Mucosa of descending colon (tissue), 3 donors: ENCODE measurements at regions of chr22 and their contacts with region 1.

Region 1: DNA sequence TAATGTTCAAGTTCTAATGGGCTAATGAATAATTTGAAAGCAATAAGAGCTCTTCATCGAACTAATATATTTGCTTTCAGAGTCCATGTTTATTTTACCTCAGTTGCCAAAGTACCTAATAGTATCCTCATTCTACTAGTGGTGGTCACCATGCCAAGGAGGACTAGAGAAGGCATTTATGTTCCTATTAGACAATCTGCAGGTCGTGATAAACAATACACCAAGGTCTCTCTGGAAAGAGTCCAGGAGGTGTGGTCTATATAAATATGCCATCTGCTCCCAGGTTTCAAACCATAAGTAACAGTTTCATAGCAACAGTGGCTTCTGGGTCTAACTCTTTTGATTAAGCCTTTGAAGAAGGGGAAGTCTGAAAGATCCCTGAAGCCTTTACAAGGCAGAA is 42.9 kb downstream of the ARFGAP3 start:
- DNase-seq: peak in 1 of 3 donors; percentile 27
- ATAC-seq: no peak
- H3K4me3 ChIP-seq: no peak overlapping the region
- H3K4me1 ChIP-seq: no peaks in the 10 kb centered on the region
- CTCF ChIP-seq: no peak

Region 2: DNA sequence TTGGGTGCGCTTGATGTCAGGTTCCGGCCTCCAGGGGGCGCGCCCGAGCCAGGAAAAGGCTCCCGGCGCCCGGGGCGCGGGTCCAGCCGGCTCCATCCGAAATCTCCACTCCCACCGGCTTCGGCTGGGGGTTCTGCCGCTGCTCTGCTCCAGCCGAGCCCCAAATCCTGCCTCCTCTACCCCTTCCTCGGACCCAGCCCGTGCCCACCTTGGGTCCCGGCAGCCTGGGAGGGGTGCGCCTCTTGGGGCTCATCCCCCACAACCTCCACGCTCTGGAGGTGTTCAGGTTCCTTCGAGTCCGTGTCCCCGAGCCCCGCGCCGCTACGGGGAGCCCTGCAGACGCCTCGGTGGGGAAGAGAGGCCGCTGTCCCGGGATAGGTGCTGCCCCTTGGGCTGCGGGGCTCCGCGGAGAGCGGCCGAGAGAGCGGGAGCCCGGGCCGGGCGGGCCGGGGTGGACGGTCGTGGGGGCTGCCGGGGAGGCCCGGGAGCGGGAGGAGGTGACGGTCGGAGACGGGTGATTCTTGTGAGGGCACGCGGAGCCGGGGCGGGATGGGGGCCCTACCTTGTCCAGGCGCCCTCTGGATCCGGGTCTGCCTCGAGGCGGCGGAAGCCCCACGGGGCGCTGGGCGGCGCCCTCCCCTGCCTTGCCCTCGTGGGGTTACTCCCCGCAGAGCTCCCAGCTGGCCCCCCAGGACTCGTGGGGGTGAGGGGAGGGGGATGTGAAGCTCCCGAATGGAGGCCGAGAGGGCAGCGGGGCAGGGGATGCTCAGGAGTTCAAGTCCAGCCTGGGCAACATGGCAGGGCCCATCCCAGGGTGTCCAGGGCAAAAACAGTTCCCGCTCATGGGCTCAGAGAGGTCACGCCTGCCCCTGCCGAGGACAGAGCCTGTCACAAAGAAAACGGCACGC is 151.8 kb before region 1 on chr22:
- intact Hi-C with region 1: loop called in 1 of 2 experiments (anchors 10 kb)
- DNase-seq: peak; percentile 84 to 93 (median 89)
- ATAC-seq: peak; percentile 96
- H3K4me3 ChIP-seq: no peak overlapping the region
- H3K4me1 ChIP-seq: peaks cover 7% of the 10 kb centered on the region
- CTCF ChIP-seq: peak; percentile 61

Region 3: GRCh38 chr22:43616645-43617044 is 802.4 kb after region 1 on chr22:
- intact Hi-C with region 1: no loop called
- DNase-seq: peak in 2 of 3 donors; percentile 53 to 80
- ATAC-seq: peak; percentile 74
- H3K4me3 ChIP-seq: no peak overlapping the region
- H3K4me1 ChIP-seq: no peaks in the 10 kb centered on the region
- CTCF ChIP-seq: no peak